Sciatic nerve (tissue), 2 donors: ENCODE measurements at regions of chr2 and their contacts with region 1.

Region 1: GRCh38 chr2:197201874-197202273 is 108.7 kb downstream of the ANKRD44 start:
- DNase-seq: no peak
- ATAC-seq: no peak

Region 2: DNA sequence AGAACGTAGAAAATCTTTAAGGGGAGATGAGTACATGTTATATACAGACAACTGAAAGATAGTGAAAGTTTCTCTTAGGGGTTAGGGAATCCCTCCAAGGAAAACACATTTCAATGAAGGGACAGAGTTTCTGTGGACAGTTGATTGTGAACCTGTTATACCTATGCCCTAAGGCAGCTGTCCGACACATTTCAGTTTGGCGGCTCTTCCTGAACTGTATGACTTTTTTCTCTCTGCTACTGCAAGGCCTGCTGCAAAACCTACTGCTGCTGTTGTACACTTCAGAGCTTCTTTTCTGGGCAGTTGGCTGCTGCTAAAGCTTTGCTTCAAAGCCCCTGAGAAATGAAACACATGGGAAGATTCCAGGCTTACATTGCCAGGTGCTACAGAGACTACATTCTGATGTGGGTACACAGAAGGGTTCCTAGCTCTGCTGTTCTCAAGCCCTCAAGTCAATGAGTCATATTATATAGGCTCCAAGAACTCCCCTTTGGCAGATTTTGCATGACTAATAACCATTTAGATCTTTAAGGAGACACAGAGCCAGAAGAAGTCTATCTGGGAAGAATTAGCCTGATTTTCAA is 262.6 kb before region 1 on chr2:
- intact Hi-C with region 1: no loop called
- DNase-seq: no peak
- ATAC-seq: no peak

Region 3: DNA sequence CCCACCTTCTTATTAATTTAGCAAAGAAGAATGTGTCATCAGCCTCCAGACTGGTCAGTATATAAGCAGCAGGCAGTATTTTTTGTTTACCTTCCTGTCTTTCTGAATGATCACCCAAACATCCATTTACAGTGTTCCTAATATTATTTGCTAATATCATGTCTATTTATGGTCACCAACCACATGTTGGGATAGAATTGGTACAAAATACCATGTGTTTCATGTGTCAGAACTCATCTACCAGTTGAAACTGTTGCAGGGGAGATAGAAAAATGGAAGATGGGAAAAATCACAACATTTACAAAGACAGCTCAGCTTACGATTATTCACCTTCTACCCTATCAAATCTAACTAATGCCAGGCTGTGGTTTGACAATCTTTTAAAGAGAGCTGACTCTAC is 42.5 kb after region 1 on chr2:
- intact Hi-C with region 1: loop called (anchors 1 kb)
- DNase-seq: no peak
- ATAC-seq: no peak